ENCODE measurements at regions of chr1 and their contacts with region 1.

Region 1: DNA sequence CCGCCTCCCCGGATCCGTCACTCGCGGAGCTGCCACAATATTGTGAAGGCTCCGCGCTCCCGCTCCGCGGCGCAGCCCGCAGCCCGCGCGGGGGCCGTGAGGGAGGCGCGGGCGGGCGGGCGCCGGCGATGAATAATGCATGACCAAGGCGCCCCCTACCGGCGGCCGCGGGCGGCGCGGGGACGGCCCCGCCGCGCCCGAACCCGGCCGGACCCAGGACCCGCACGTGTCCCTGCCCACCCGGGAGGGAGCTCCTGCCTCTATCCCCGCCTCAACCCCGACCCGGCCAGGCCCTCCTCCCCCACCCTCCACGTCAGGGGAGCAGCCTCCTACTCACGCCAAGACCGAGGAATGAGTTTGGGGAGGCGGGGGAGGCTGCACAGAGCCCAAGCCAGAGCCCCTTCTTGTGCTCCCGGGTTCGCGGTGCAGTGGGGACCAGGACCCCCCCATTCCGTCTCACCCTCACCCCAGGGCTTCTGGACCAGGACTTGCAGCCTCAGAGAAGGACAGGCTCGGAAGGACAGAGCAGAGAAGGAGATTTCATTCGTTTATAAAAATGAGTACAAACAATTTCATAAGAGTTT is 70.8 kb upstream of the CASZ1 start:
- DNase-seq: peak; percentile 95
- H3K4me3 ChIP-seq: peak overlapping the region; percentile 44 to 57; a peak in 3 of 4 replicates
- H3K27ac ChIP-seq: no peak overlapping the region; a peak in 1 of 4 replicates
- H3K4me1 ChIP-seq: peaks cover 0 to 17% of the 10 kb centered on the region in 2 experiments; a peak in 2 of 4 replicates
- H3K27me3 ChIP-seq: 0 out of 2 replicates have a peak, but pooled peaks cover 7% of the 10 kb centered on the region
- CTCF ChIP-seq: peak; percentile 61
- EP300 ChIP-seq: no peak; a peak in 1 of 4 replicates
- RAD21 ChIP-seq: peak; percentile 66

Region 2: GRCh38 chr1:10378081-10378841 is 489.0 kb before region 1 on chr1:
- CTCF ChIA-PET with region 1: no interaction called
- POLR2A ChIA-PET with region 1: no interaction called
- DNase-seq: no peak
- H3K4me3 ChIP-seq: no peak overlapping the region
- H3K27ac ChIP-seq: peak overlapping the region in 1 of 2 experiments; percentile 43; a peak in 1 of 4 replicates
- H3K4me1 ChIP-seq: 0 out of 4 replicates have a peak, but pooled peaks cover 0 to 7% of the 10 kb centered on the region in 2 experiments
- H3K27me3 ChIP-seq: no peaks in the 10 kb centered on the region
- CTCF ChIP-seq: no peak
- EP300 ChIP-seq: no peak
- RAD21 ChIP-seq: no peak

Region 3: DNA sequence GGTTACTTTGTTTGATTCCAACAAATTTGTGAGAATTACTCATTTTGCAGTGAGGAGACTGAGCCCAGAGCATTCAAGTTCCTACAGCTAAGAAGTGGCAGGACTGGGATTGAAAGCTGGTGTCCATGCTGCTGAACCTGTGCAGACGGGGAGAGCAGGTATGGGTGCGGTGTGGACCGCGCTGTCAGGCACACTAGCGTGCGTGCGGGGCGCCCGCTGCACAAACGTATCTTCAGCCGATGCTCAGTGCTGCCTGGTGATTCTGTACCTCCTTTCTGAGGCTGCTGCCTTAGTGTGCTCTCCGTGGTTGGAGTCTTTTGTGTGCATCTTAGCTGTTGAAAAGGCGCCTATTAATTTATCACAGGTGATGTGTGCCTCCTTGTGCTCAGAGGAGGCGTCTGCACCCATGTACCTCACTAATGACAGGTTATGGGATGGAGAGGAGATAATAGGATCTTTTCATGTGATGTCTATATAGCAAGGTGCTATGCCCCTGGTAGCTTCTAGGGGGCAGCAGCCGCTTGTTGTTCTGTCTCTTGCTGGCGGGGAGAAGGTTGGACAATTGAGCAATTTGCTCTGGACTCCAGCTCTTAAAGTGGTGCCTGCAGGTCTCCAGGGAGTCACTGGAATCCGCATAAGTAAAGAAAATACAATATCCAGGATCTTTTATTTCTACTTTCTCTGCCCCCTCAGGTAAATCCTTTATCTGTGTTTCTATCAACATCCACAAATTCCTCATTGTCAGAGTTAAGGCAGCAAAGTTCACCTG is 359.9 kb before region 1 on chr1:
- CTCF ChIA-PET with region 1: interaction called, 25 read pairs
- POLR2A ChIA-PET with region 1: no interaction called
- DNase-seq: peak; percentile 83
- H3K4me3 ChIP-seq: no peak overlapping the region; a peak in 1 of 4 replicates
- H3K27ac ChIP-seq: no peak overlapping the region
- H3K4me1 ChIP-seq: peaks cover 27 to 39% of the 10 kb centered on the region in 2 experiments
- H3K27me3 ChIP-seq: no peaks in the 10 kb centered on the region
- CTCF ChIP-seq: peak; percentile 87
- EP300 ChIP-seq: no peak
- RAD21 ChIP-seq: peak; percentile 90

Region 4: DNA sequence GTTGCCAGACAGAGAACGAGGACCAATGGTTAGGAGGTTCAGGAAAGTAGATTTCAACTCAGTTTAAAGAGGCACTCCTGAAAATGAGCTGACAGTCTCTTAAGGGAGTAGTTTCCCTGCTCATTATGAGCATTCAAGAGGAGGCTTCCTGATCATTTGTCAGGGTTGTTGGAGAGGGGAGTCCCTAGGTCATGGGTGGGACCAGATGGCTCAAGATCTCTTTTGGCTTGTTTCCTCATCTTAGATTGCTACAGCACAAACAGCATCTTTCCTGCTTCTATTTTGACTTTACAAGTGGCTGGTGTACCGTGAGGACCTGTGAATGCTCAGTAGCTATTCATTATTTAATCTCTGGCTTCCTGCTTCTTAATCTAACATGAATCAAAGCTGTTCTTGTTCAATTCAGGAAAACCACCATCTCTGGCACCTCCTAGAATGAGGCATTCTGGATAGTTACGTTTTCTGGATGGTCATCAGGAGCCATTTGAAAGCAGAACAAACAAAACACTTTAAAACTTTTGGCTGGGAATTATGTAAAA is 344.8 kb before region 1 on chr1:
- CTCF ChIA-PET with region 1: interaction called, 12 read pairs
- POLR2A ChIA-PET with region 1: no interaction called
- DNase-seq: no peak
- H3K4me3 ChIP-seq: no peak overlapping the region
- H3K27ac ChIP-seq: no peak overlapping the region
- H3K4me1 ChIP-seq: peaks cover 17% of the 10 kb centered on the region in 2 experiments; a peak in 3 of 4 replicates
- H3K27me3 ChIP-seq: no peaks in the 10 kb centered on the region
- CTCF ChIP-seq: no peak
- EP300 ChIP-seq: no peak
- RAD21 ChIP-seq: no peak

Region 5: DNA sequence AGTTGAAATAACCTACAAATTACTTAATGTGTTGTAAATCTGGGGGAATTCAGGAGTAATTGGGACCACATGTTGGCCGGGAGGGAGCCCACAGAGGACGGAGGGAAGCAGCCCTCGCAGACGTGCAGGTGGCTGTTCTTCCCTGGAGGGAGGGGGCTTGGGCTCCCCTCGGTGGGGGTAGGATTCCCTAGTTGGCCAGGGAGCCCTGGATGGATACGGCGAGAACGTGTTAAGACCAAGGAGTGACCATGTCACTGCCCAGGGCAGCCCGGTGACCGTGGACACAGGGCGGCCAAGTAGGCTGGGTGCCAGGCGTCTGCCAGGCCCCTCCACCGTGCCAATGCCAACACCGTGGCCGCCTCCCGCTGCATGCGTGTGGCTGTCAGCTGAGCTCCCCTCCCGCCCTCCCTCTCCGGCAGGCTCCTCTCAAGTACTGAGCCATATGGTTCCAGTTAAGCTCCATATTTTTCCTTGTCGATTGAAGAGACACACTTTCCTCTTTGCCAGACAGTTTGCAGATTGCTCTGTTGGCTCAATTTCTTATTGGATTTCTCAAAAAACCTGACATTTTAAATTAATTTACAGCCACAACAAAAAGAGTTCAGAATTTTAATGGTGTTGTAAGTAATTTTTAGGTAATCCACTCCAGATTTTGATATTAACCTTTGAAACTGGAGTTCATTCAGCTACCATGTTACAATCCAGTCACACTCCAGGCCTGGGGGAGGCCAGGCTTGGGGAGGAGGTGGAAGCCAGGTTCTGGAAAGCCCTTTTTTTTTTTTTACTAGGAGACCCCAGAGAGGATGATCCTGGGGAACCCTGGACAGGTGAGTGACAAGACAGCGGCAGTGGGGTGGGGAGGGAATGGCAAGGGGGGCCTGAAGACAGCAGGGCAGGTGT is 142.0 kb before region 1 on chr1:
- CTCF ChIA-PET with region 1: interaction called, 17 read pairs
- POLR2A ChIA-PET with region 1: no interaction called
- DNase-seq: peak; percentile 97
- H3K4me3 ChIP-seq: no peak overlapping the region; a peak in 1 of 4 replicates
- H3K27ac ChIP-seq: peak overlapping the region in 1 of 2 experiments; percentile 81; a peak in 2 of 4 replicates
- H3K4me1 ChIP-seq: peaks cover 11 to 47% of the 10 kb centered on the region in 2 experiments; a peak in 3 of 4 replicates
- H3K27me3 ChIP-seq: no peaks in the 10 kb centered on the region
- CTCF ChIP-seq: no peak
- EP300 ChIP-seq: peak in 1 of 2 experiments; percentile 88; a peak in 2 of 4 replicates
- RAD21 ChIP-seq: peak; percentile 11; the same call in 1 of the 2 replicates

Region 6: GRCh38 chr1:10851024-10852013 is 15.9 kb before region 1 on chr1:
- CTCF ChIA-PET with region 1: interaction called, 21 read pairs
- POLR2A ChIA-PET with region 1: no interaction called
- DNase-seq: no peak
- H3K4me3 ChIP-seq: no peak overlapping the region
- H3K27ac ChIP-seq: no peak overlapping the region
- H3K4me1 ChIP-seq: no peaks in the 10 kb centered on the region
- H3K27me3 ChIP-seq: no peaks in the 10 kb centered on the region
- CTCF ChIP-seq: no peak
- EP300 ChIP-seq: no peak
- RAD21 ChIP-seq: no peak

Region 7: DNA sequence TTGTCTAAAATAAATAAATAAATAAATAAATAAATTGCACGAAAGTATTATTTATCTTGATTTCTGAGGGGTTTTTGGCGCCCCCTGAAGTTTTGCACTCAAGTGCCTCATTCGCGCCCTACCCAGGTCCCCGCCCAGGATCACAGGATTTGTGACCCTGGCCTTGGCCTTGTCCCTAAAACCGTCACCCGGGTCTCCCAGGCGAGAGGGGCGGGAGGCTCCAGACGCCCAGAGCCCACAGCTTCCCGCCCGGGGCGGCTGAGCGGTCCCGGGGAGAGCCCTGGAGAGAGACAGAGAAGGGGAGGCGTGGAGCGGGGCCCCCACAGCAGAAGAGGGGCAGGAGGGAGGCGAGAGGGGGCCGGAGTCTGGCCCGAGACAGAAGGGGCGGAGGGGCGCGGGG is 21.1 kb after region 1 on chr1:
- CTCF ChIA-PET with region 1: interaction called, 12 read pairs
- POLR2A ChIA-PET with region 1: no interaction called
- DNase-seq: no peak
- H3K4me3 ChIP-seq: no peak overlapping the region
- H3K27ac ChIP-seq: no peak overlapping the region
- H3K4me1 ChIP-seq: peaks cover 0 to 19% of the 10 kb centered on the region in 2 experiments; a peak in 1 of 4 replicates
- H3K27me3 ChIP-seq: peaks cover 7% of the 10 kb centered on the region; the same call in 1 of the 2 replicates
- CTCF ChIP-seq: no peak
- EP300 ChIP-seq: no peak
- RAD21 ChIP-seq: no peak

Region 8: DNA sequence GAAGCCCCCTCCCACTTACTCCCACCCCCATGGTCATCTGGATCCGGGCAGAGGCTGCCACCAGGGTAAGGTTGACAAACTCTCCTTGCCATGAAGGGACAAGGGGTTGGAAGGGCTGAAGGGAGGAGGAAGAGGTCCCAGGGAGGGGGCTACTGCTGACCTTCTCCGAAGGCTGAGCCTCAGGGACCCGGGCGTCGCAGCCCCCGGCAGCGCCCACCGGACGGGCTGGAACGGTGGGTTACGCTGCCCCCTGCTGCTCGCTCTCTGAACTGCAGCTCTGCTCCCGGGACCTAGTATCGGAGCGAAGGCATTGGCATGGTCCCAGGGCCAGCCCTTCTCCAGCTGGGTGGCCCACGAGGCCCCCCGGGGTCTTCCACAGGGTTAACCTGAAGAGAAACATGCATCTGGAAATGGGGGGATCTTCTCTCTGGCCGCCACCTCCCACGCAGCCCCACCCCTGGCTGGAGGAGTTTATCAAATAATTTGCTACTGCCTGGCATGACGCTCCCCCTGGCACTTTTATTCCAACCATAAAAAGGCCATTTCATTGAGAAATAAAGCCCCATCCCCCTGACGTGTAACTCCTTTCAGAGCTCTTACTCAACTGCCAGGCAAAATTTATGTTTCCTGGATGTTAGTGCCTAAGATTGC is 74.8 kb after region 1 on chr1:
- CTCF ChIA-PET with region 1: interaction called, 13 read pairs
- POLR2A ChIA-PET with region 1: no interaction called
- DNase-seq: peak; percentile 92
- H3K4me3 ChIP-seq: peak overlapping the region in 1 of 2 experiments; percentile 51; a peak in 2 of 4 replicates
- H3K27ac ChIP-seq: no peak overlapping the region
- H3K4me1 ChIP-seq: peaks cover 0 to 55% of the 10 kb centered on the region in 2 experiments; a peak in 3 of 4 replicates
- H3K27me3 ChIP-seq: no peaks in the 10 kb centered on the region
- CTCF ChIP-seq: peak; percentile 88
- EP300 ChIP-seq: no peak
- RAD21 ChIP-seq: peak; percentile 80